ENCODE measurements at regions of chr15 and their contacts with region 1.

Region 1: GRCh38 chr15:85615930-85616329 is 178.8 kb downstream of the KLHL25 start:
- DNase-seq: peak in 1 of 2 experiments; percentile 57
- H3K4me3 ChIP-seq: no peak overlapping the region
- H3K4me3 Mint-ChIP-seq: no peak overlapping the region
- H3K27ac Mint-ChIP-seq: no peak overlapping the region
- H3K4me1 ChIP-seq: peaks cover 8% of the 10 kb centered on the region
- H3K4me1 Mint-ChIP-seq: peaks cover 10% of the 10 kb centered on the region
- H3K27me3 ChIP-seq: no peaks in the 10 kb centered on the region
- H3K27me3 Mint-ChIP-seq: no peaks in the 10 kb centered on the region
- CTCF ChIP-seq: peak; percentile 57 to 72

Region 2: GRCh38 chr15:85707519-85708338 is 91.8 kb after region 1 on chr15:
- CTCF ChIA-PET with region 1: no interaction called
- POLR2A ChIA-PET with region 1: no interaction called
- intact Hi-C with region 1: loop called (anchors 1 kb)
- DNase-seq: peak; percentile 65 to 71
- H3K4me3 ChIP-seq: no peak overlapping the region
- H3K4me3 Mint-ChIP-seq: peak overlapping the region; percentile 66
- H3K27ac Mint-ChIP-seq: peak overlapping the region; percentile 77
- H3K4me1 ChIP-seq: peaks cover 32% of the 10 kb centered on the region
- H3K4me1 Mint-ChIP-seq: peaks cover 35% of the 10 kb centered on the region
- H3K27me3 ChIP-seq: no peaks in the 10 kb centered on the region
- H3K27me3 Mint-ChIP-seq: no peaks in the 10 kb centered on the region
- CTCF ChIP-seq: no peak

Region 3: GRCh38 chr15:85760531-85761371 is 144.8 kb after region 1 on chr15:
- CTCF ChIA-PET with region 1: no interaction called
- POLR2A ChIA-PET with region 1: no interaction called
- intact Hi-C with region 1: no loop called
- DNase-seq: no peak
- H3K4me3 ChIP-seq: no peak overlapping the region
- H3K4me3 Mint-ChIP-seq: no peak overlapping the region
- H3K27ac Mint-ChIP-seq: no peak overlapping the region
- H3K4me1 ChIP-seq: no peaks in the 10 kb centered on the region
- H3K4me1 Mint-ChIP-seq: no peaks in the 10 kb centered on the region
- H3K27me3 ChIP-seq: no peaks in the 10 kb centered on the region
- H3K27me3 Mint-ChIP-seq: no peaks in the 10 kb centered on the region
- CTCF ChIP-seq: no peak